ENCODE measurements at regions of chr20 and their contacts with region 1.

Region 1: GRCh38 chr20:34337982-34338726 is 24.9 kb upstream of the ITCH start:
- DNase-seq: no peak
- ATAC-seq: no peak
- H3K4me3 ChIP-seq: no peak overlapping the region
- H3K27ac ChIP-seq: no peak overlapping the region
- H3K4me1 ChIP-seq: peaks cover 3% of the 10 kb centered on the region
- H3K27me3 ChIP-seq: no peaks in the 10 kb centered on the region
- CTCF ChIP-seq: no peak
- POLR2A ChIP-seq: no peak
- RAD21 ChIP-seq: no peak

Region 2: GRCh38 chr20:34403908-34404307 is 65.8 kb after region 1 on chr20:
- CTCF ChIA-PET with region 1: no interaction called
- POLR2A ChIA-PET with region 1: no interaction called
- dilution Hi-C with region 1: no loop called
- in situ Hi-C with region 1: no loop called
- intact Hi-C with region 1: no loop called
- DNase-seq: no peak
- ATAC-seq: no peak
- H3K4me3 ChIP-seq: no peak overlapping the region
- H3K27ac ChIP-seq: no peak overlapping the region
- H3K4me1 ChIP-seq: peaks cover 11% of the 10 kb centered on the region
- H3K27me3 ChIP-seq: no peaks in the 10 kb centered on the region
- CTCF ChIP-seq: no peak
- POLR2A ChIP-seq: no peak
- RAD21 ChIP-seq: no peak

Region 3: DNA sequence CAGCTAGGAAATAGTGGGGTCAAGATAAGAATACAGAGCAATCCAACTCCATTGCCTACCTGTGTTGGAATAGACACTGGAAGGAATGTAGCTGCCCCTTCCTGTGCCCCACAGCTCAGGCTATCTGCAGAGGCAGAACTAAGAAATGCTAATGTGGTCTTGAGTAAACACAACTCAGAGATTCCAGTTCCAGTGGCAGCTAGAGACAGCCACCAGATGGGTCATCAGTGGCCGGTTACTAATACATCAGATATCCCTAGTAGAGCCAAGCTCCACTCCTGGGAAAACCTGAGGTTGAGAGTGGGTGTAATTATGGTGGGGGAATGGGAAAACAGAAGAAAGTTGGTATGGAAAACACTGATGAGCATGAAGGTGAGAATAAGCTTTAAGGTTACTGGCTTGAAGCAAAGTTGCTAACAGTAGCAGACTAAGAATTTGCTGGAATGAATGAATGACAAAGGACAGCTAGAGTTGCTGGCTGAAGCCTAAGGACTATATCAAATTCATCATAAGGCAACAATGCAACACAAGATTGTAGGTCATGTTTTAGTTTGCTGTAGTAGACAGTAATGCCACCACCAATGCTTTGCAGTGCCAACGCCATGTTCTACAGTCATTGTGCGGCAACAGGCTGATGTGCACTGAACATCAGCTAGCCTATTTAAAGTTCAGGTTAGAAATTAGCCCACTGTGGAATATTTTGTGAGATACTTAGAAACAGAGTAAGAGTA is 982.4 kb after region 1 on chr20:
- CTCF ChIA-PET with region 1: no interaction called
- POLR2A ChIA-PET with region 1: interaction called, 18 read pairs
- dilution Hi-C with region 1: no loop called
- in situ Hi-C with region 1: no loop called
- intact Hi-C with region 1: no loop called
- DNase-seq: peak; percentile 84
- ATAC-seq: peak; percentile 27
- H3K4me3 ChIP-seq: no peak overlapping the region
- H3K27ac ChIP-seq: peak overlapping the region; percentile 64
- H3K4me1 ChIP-seq: peaks cover 34% of the 10 kb centered on the region
- H3K27me3 ChIP-seq: no peaks in the 10 kb centered on the region
- CTCF ChIP-seq: no peak
- POLR2A ChIP-seq: no peak
- RAD21 ChIP-seq: no peak